Transverse colon (tissue), 4 donors: ENCODE measurements at regions of chr13 and their contacts with region 1.

Region 1: GRCh38 chr13:46721054-46721453 is 75.9 kb downstream of the ESD start:
- DNase-seq: peak; percentile 39
- H3K4me3 ChIP-seq: no peak overlapping the region
- H3K27ac ChIP-seq: no peak overlapping the region
- H3K4me1 ChIP-seq: peaks cover 0 to 5% (median 0%) of the 10 kb centered on the region in 4 donors
- H3K27me3 ChIP-seq: no peaks in the 10 kb centered on the region
- CTCF ChIP-seq: peak; percentile 64 to 82 (median 68)
- EP300 ChIP-seq: no peak
- POLR2A ChIP-seq: no peak

Region 2: DNA sequence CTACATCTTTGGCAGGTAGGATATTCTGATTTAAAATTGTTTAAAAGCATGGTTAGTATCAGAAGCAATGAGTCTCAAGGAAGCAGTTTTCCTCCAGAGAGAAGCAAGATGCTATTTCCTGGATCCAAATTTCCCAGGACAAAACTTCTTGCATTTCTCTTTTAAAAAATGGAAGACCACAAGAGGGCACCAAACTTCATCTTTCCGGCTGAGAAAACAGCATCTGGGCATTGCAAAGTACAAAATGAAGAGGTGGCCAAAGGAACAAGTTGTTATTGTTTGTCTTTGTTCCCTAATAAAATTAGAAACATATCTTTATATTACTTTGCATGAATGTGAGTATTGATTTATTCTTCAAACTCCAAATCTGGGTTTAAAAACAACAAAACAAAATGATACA is 228.1 kb before region 1 on chr13:
- in situ Hi-C with region 1: loop called in 3 of 4 experiments (anchors 10 kb)
- intact Hi-C with region 1: loop called (anchors 5 kb)
- DNase-seq: no peak
- H3K4me3 ChIP-seq: no peak overlapping the region
- H3K27ac ChIP-seq: no peak overlapping the region
- H3K4me1 ChIP-seq: no peaks in the 10 kb centered on the region
- H3K27me3 ChIP-seq: no peaks in the 10 kb centered on the region
- CTCF ChIP-seq: peak; percentile 41 to 62 (median 57)
- EP300 ChIP-seq: no peak
- POLR2A ChIP-seq: no peak

Region 3: DNA sequence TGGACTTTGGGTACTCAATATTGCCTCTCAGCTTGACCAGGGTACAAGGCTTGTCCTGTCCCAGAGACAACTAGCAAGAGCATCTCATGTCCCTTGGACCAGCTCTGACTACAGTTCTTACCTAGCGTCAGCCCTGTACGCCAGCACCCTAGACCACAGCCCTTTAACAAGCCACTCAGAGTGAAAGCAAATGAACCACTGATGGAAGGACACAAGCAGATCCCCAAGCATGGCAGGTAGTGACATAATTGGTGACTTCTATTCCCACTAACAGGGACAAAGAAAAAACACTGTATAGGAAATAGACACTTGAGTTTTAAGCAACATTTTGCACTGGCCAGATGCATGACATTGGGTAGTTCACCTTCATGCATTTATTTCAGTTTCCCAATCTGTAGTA is 176.8 kb before region 1 on chr13:
- in situ Hi-C with region 1: loop called in 2 of 4 experiments (anchors 10 kb)
- intact Hi-C with region 1: no loop called
- DNase-seq: no peak
- H3K4me3 ChIP-seq: no peak overlapping the region
- H3K27ac ChIP-seq: no peak overlapping the region
- H3K4me1 ChIP-seq: no peaks in the 10 kb centered on the region
- H3K27me3 ChIP-seq: no peaks in the 10 kb centered on the region
- CTCF ChIP-seq: no peak
- EP300 ChIP-seq: no peak
- POLR2A ChIP-seq: no peak

Region 4: GRCh38 chr13:46571189-46571908 is 149.7 kb before region 1 on chr13:
- in situ Hi-C with region 1: no loop called
- intact Hi-C with region 1: no loop called
- DNase-seq: no peak
- H3K4me3 ChIP-seq: no peak overlapping the region
- H3K27ac ChIP-seq: peak overlapping the region in 2 of 4 donors; percentile 17 to 41
- H3K4me1 ChIP-seq: peaks cover 0 to 38% (median 23%) of the 10 kb centered on the region in 4 donors
- H3K27me3 ChIP-seq: no peaks in the 10 kb centered on the region
- CTCF ChIP-seq: no peak
- EP300 ChIP-seq: no peak
- POLR2A ChIP-seq: no peak